AG04449 (cell line): ENCODE measurements at regions of chr22 and their contacts with region 1.

Region 1: GRCh38 chr22:20968281-20968977 is 1.4 kb downstream of the AIFM3 start:
- DNase-seq: no peak
- H3K4me3 ChIP-seq: no peak overlapping the region
- CTCF ChIP-seq: no peak

Region 2: DNA sequence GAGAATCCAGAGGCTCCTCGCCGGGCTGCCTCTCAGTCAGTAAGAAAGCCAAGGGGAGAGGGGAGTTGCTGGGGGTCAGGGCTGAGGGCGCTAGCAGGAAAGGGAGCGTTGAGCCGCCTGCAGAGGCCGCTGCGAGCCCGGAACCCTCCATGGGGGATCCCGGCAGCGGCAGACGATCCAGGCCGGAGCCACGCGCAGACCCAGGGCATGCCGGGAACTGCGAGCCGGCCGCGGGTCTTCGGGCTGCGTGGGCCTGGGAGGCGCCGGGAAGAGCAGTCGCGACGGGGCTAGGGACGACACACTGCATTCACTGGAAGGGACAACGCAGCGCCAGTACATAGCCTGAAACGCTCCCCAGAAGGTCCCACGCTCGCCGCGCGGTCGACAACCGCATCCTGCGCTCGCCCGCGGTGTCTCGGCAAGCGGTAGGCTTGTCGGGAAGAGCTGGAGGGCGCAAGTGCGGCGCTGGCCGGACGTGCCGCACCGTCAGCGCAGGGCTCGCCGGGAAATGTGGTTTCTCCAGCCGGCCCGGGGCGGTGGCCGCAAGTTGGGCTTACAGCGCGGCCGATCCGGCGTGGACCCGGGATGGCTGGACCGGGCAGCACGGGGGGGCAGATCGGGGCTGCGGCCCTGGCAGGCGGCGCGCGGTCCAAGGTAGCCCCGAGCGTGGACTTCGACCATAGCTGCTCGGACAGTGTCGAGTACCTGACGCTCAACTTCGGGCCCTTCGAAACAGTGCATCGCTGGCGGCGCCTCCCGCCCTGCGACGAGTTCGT is 13.5 kb after region 1 on chr22 and contains the start of gene LZTR1:
- CTCF ChIA-PET with region 1: interaction called, 29 read pairs
- POLR2A ChIA-PET with region 1: interaction called, 3 read pairs
- DNase-seq: no peak
- H3K4me3 ChIP-seq: peak within 1 kb of the TSS; percentile 90
- CTCF ChIP-seq: peak; percentile 90

Region 3: DNA sequence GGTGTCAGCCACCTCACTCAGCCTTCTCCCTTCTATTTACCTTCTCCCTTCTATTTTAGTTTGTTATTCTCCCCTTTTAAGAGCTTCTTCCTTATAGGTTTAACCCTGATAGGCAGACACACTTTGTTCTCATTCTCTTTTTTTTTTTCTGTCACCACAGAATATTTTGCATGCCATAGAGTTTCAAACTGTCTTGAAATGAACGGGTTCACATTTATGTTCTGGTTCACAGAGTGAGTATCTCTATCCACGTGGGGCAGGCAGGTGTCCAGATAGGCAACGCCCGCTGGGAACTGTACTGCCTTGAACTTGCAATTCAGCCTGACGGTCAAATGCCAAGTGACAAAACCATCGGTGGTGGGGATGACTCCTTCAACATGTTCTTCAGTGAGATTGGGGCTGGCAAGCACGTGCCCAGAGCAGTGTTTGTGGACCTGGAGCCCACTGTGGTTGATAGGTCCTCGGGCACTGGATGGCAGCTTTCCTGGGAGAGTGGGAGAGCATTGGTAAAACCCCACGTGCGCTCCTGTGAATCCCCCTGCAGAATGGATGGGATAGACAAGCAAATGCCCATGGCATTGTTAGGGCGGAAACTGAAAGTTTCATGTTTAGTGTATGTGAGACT is 96.9 kb after region 1 on chr22:
- CTCF ChIA-PET with region 1: no interaction called
- POLR2A ChIA-PET with region 1: no interaction called
- DNase-seq: no peak
- H3K4me3 ChIP-seq: no peak overlapping the region
- CTCF ChIP-seq: no peak